Activated B cell treated with CpG ODN at 0.5 μM for 24 hours (primary cell): ENCODE measurements at regions of chr3 and their contacts with region 1.

Region 1: GRCh38 chr3:132416807-132417694 is at the start of gene DNAJC13:
- DNase-seq: peak; percentile 93
- ATAC-seq: peak; percentile 89
- H3K4me3 Mint-ChIP-seq: peak within 1 kb of the TSS; percentile 99
- H3K27ac Mint-ChIP-seq: peak within 1 kb of the TSS; percentile 98
- H3K4me1 Mint-ChIP-seq: peaks cover 32% of the 10 kb centered on the region
- H3K27me3 Mint-ChIP-seq: no peaks in the 10 kb centered on the region
- CTCF ChIP-seq: no peak
- total RNA-seq, gene DNAJC13: 35.9 and 39.8 TPM in 2 replicates

Region 2: GRCh38 chr3:130746246-130747039 is 1670.6 kb before region 1 on chr3 and contains the start of gene PIK3R4:
- CTCF ChIA-PET with region 1: no interaction called
- POLR2A ChIA-PET with region 1: interaction called, 3 read pairs
- intact Hi-C with region 1: loop called (anchors 5 kb)
- DNase-seq: peak; percentile 82
- ATAC-seq: peak; percentile 80
- H3K4me3 Mint-ChIP-seq: peak within 1 kb of the TSS; percentile 87
- H3K27ac Mint-ChIP-seq: peak within 1 kb of the TSS; percentile 91
- H3K4me1 Mint-ChIP-seq: peaks cover 53% of the 10 kb centered on the region
- H3K27me3 Mint-ChIP-seq: no peaks in the 10 kb centered on the region
- CTCF ChIP-seq: no peak
- total RNA-seq, gene PIK3R4: 22.1 and 32.4 TPM in 2 replicates

Region 3: DNA sequence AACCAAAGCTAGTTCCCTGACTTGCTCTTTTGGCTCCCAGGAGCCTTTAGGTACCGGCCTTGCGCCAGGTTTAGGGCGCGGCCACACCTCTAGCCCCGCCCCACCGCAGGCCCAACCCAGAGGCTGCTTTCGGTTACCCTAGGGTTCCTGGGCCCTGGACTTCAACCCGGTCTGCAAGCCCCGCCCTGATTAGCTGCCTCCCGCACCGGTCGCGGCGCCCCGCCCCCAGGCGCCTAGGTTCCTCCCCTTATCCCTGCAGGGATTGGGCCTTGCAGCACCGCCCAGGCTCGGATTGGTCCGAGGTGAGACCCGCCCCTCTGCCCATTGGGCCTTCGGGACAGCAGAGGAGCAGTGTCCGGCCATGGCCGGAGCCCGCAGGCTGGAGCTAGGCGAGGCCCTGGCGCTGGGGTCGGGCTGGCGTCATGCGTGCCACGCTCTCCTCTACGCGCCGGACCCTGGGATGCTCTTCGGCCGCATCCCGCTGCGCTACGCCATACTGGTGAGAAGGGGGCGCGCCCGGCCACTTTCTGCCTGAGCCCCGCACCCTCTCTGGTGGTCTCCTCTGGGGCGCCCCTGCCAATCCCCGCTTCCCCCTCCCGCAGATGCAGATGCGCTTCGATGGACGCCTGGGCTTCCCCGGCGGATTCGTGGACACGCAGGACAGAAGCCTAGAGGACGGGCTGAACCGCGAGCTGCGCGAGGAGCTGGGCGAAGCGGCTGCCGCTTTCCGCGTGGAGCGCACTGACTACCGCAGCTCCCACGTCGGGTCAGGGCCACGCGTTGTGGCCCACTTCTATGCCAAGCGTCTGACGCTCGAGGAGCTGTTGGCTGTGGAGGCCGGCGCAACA is 1035.4 kb before region 1 on chr3 and contains the start of gene NUDT16:
- CTCF ChIA-PET with region 1: no interaction called
- POLR2A ChIA-PET with region 1: interaction called, 5 read pairs
- intact Hi-C with region 1: loop called (anchors 1 kb)
- DNase-seq: peak; percentile 98
- ATAC-seq: peak; percentile 98
- H3K4me3 Mint-ChIP-seq: peak within 1 kb of the TSS; percentile 97
- H3K27ac Mint-ChIP-seq: peak within 1 kb of the TSS; percentile 92
- H3K4me1 Mint-ChIP-seq: peaks cover 24% of the 10 kb centered on the region
- H3K27me3 Mint-ChIP-seq: no peaks in the 10 kb centered on the region
- CTCF ChIP-seq: no peak
- total RNA-seq, gene NUDT16: 15.8 TPM in 2 replicates

Region 4: GRCh38 chr3:132405188-132405587 is 11.9 kb before region 1 on chr3:
- CTCF ChIA-PET with region 1: no interaction called
- POLR2A ChIA-PET with region 1: interaction called, 20 read pairs
- intact Hi-C with region 1: loop called (anchors 1 kb)
- DNase-seq: no peak
- ATAC-seq: no peak
- H3K4me3 Mint-ChIP-seq: no peak overlapping the region
- H3K27ac Mint-ChIP-seq: no peak overlapping the region
- H3K4me1 Mint-ChIP-seq: peaks cover 21% of the 10 kb centered on the region
- H3K27me3 Mint-ChIP-seq: no peaks in the 10 kb centered on the region
- CTCF ChIP-seq: no peak

Region 5: GRCh38 chr3:132444383-132444782 is 27.3 kb after region 1 on chr3:
- CTCF ChIA-PET with region 1: no interaction called
- POLR2A ChIA-PET with region 1: no interaction called
- intact Hi-C with region 1: no loop called
- DNase-seq: no peak
- ATAC-seq: no peak
- H3K4me3 Mint-ChIP-seq: no peak overlapping the region
- H3K27ac Mint-ChIP-seq: no peak overlapping the region
- H3K4me1 Mint-ChIP-seq: peaks cover 10% of the 10 kb centered on the region
- H3K27me3 Mint-ChIP-seq: no peaks in the 10 kb centered on the region
- CTCF ChIP-seq: no peak

Region 6: DNA sequence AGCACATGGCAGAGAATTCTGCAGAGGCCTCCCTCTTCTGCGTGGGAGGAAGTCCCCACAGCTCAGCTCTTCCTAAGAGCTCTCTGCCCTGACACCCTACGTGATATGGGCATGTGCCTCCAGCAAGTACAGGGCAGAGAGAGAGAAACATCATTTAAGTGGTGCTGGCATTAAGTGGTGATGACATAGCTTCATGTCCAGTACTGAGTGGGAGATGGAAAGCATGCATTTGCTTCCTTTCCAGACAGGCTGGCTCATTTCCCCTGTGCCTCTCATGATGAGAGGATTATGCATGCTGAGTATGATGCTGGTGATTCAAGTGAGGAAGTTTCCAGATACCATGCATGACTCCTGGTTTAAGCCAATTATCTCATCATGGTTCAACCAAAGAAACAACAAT is 1009.7 kb after region 1 on chr3:
- CTCF ChIA-PET with region 1: no interaction called
- POLR2A ChIA-PET with region 1: no interaction called
- intact Hi-C with region 1: loop called (anchors 10 kb)
- DNase-seq: no peak
- ATAC-seq: no peak
- H3K4me3 Mint-ChIP-seq: no peak overlapping the region
- H3K27ac Mint-ChIP-seq: no peak overlapping the region
- H3K4me1 Mint-ChIP-seq: peaks cover 15% of the 10 kb centered on the region
- H3K27me3 Mint-ChIP-seq: no peaks in the 10 kb centered on the region
- CTCF ChIP-seq: no peak

Region 7: GRCh38 chr3:133805527-133806475 is 1388.8 kb after region 1 on chr3 and contains the start of gene SRPRB:
- CTCF ChIA-PET with region 1: no interaction called
- POLR2A ChIA-PET with region 1: no interaction called
- intact Hi-C with region 1: loop called (anchors 1 kb)
- DNase-seq: peak; percentile 89
- ATAC-seq: peak; percentile 98
- H3K4me3 Mint-ChIP-seq: peak within 1 kb of the TSS; percentile 96
- H3K27ac Mint-ChIP-seq: peak within 1 kb of the TSS; percentile 95
- H3K4me1 Mint-ChIP-seq: peaks cover 21% of the 10 kb centered on the region
- H3K27me3 Mint-ChIP-seq: peaks cover 3% of the 10 kb centered on the region
- CTCF ChIP-seq: no peak
- total RNA-seq, gene SRPRB: 36.5 and 38.5 TPM in 2 replicates